ENCODE measurements at regions of chr6 and their contacts with region 1.

Region 1: DNA sequence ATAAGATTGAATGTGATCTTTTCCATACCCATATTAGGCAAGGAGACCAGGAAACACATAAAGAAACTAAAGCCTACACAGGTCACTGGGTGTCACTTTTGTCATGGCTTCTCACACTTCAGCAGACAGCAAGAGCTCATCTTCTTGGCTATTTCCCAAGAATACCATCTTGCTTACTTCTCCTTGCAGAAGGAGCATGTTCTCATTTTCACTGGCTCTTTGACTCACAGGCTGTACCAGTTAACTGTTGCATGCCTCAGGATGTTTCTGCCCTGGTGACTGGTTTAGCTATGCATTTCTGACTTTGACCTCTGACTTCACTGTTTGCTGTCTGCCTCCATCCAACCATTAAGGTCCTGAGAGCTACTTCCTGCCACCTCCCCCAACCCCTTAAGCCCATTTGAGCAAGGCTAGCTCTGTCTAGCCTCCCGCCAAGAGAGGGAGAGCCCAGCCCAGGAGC is 40.3 kb upstream of the OGFRL1 start:
- DNase-seq: no peak
- ATAC-seq: peak in 1 of 2 donors; percentile 66

Region 2: GRCh38 chr6:71190809-71191208 is 57.5 kb before region 1 on chr6:
- intact Hi-C with region 1: loop called in 1 of 2 experiments (anchors 10 kb)
- DNase-seq: no peak
- ATAC-seq: no peak